ENCODE measurements at regions of chr19 and their contacts with region 1.

Region 1: GRCh38 chr19:46788262-46788967 is at the start of gene SLC1A5:
- DNase-seq: peak; percentile 96
- H3K4me3 ChIP-seq: peak within 1 kb of the TSS; percentile 60 to 99 (median 89)
- H3K27ac ChIP-seq: peak within 1 kb of the TSS; percentile 98
- H3K4me1 ChIP-seq: peaks cover 33% of the 10 kb centered on the region
- H3K27me3 ChIP-seq: no peaks in the 10 kb centered on the region
- CTCF ChIP-seq: no peak
- POLR2A ChIP-seq: peak; percentile 100
- total RNA-seq, gene SLC1A5: 105 and 114 TPM in 2 replicates

Region 2: GRCh38 chr19:46529622-46530462 is 258.6 kb before region 1 on chr19:
- CTCF ChIA-PET with region 1: no interaction called
- POLR2A ChIA-PET with region 1: no interaction called
- dilution Hi-C with region 1: no loop called
- intact Hi-C with region 1: no loop called
- DNase-seq: peak; percentile 55
- H3K4me3 ChIP-seq: no peak overlapping the region
- H3K27ac ChIP-seq: no peak overlapping the region
- H3K4me1 ChIP-seq: no peaks in the 10 kb centered on the region
- H3K27me3 ChIP-seq: peaks cover 0 to 1% of the 10 kb centered on the region in 2 experiments
- CTCF ChIP-seq: peak; percentile 86 to 94
- POLR2A ChIP-seq: no peak

Region 3: GRCh38 chr19:46542428-46543230 is 245.8 kb before region 1 on chr19:
- CTCF ChIA-PET with region 1: no interaction called
- POLR2A ChIA-PET with region 1: no interaction called
- dilution Hi-C with region 1: no loop called
- intact Hi-C with region 1: no loop called
- DNase-seq: peak; percentile 87
- H3K4me3 ChIP-seq: no peak overlapping the region
- H3K27ac ChIP-seq: no peak overlapping the region
- H3K4me1 ChIP-seq: no peaks in the 10 kb centered on the region
- H3K27me3 ChIP-seq: no peaks in the 10 kb centered on the region
- CTCF ChIP-seq: peak; percentile 72 to 74
- POLR2A ChIP-seq: no peak

Region 4: GRCh38 chr19:46753420-46754155 is 34.8 kb before region 1 on chr19:
- CTCF ChIA-PET with region 1: interaction called, 9 read pairs
- POLR2A ChIA-PET with region 1: interaction called, 5 read pairs
- dilution Hi-C with region 1: no loop called
- intact Hi-C with region 1: loop called (anchors 1 kb)
- DNase-seq: peak; percentile 41
- H3K4me3 ChIP-seq: no peak overlapping the region
- H3K27ac ChIP-seq: no peak overlapping the region
- H3K4me1 ChIP-seq: peaks cover 27% of the 10 kb centered on the region
- H3K27me3 ChIP-seq: no peaks in the 10 kb centered on the region
- CTCF ChIP-seq: peak; percentile 47 to 53
- POLR2A ChIP-seq: no peak

Region 5: DNA sequence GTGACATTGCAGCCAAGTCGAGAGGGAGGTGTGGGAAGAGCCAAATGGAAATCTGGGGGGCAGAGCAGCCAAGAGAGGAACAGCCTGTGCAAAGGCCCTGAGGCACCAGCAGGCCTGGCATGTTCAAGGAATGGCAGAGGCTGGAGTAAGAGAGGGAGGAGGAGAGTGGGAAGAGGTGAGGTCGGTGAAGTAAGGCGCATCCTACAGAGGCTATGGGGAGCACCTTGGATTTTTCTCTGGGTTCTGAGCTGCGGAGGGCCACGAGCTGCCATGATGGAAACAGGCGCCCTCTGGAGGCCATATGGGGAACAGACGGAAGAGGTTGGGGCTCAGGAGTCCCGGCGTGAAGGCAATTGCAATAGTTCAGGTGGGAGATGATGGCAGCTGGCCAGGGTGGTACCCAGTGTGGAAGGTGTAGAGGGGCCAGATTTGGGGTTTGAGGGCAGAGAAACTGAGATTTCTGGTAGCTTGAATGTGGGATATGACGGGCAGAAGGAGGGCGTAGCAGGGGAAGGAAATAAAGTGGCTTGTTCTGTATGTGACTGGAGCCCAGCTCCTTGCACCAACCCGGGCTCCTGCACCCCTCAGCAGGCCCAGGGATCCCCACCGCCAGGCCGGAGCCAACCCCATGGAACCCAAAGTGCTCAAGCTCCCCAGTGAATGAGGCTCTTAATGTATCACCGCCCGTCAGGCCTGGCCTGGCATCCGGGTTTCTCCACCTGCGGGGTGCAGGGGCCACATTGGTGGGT is 21.7 kb before region 1 on chr19:
- CTCF ChIA-PET with region 1: interaction called, 21 read pairs
- POLR2A ChIA-PET with region 1: interaction called, 6 read pairs
- dilution Hi-C with region 1: no loop called
- intact Hi-C with region 1: no loop called
- DNase-seq: peak; percentile 27
- H3K4me3 ChIP-seq: no peak overlapping the region
- H3K27ac ChIP-seq: no peak overlapping the region
- H3K4me1 ChIP-seq: no peaks in the 10 kb centered on the region
- H3K27me3 ChIP-seq: no peaks in the 10 kb centered on the region
- CTCF ChIP-seq: peak; percentile 85
- POLR2A ChIP-seq: no peak

Region 6: GRCh38 chr19:46828484-46828883 is 40.1 kb after region 1 on chr19:
- CTCF ChIA-PET with region 1: interaction called, 21 read pairs
- POLR2A ChIA-PET with region 1: interaction called, 24 read pairs
- dilution Hi-C with region 1: no loop called
- intact Hi-C with region 1: loop called (anchors 1 kb)
- DNase-seq: peak; percentile 30
- H3K4me3 ChIP-seq: no peak overlapping the region
- H3K27ac ChIP-seq: no peak overlapping the region
- H3K4me1 ChIP-seq: peaks cover 3% of the 10 kb centered on the region
- H3K27me3 ChIP-seq: no peaks in the 10 kb centered on the region
- CTCF ChIP-seq: no peak
- POLR2A ChIP-seq: no peak

Region 7: DNA sequence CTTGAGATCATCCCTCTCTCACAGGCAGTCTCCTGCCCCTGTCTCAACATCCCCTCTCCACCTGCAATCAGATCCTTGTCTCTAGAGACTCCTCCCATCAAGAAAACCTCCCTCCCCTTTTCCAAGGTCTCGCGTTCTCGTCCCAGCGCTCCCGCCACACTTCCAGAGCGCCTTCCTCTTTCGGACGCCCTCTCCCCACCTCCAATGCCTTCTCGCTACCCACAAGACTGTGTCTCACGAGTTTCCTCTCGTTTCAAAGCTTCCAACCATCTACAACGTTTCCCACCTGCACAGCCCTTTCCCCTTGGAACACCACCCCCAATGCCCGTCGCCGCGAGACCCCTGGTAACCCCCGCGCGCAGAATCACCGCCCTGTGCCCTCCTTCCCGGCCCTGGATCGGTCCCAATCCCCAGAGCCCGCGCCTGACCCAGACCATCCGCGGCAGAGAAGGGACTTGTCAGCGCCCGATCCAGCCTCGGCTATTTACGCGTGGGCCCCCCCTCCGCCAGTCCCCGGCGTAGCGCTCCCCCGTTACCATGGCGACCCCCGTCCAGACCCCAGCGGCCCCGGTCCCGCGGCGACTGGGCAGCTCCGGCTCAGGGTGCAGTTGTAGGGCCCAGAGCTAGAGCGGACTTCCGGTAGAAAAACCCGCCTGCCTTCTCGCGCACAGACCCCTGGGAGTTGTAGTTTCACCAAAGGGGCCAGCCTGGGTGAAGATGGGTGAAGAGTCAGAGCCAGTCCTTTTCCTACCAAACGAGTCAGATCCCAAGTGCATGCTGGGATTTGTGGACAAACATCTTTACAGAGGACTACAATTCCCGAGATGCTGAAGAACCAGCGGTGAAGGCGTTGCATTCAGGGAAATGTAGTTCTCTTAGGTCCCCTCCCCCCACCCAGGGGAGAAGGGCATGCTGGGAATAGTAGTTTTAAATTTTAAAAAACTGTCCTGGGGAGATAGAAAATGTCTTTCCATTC is 62.1 kb after region 1 on chr19 and contains the start of gene AP2S1:
- CTCF ChIA-PET with region 1: interaction called, 3 read pairs
- POLR2A ChIA-PET with region 1: interaction called, 3 read pairs
- dilution Hi-C with region 1: no loop called
- intact Hi-C with region 1: loop called (anchors 1 kb)
- DNase-seq: peak; percentile 99
- H3K4me3 ChIP-seq: peak within 1 kb of the TSS; percentile 71 to 97 (median 89)
- H3K27ac ChIP-seq: peak within 1 kb of the TSS; percentile 73
- H3K4me1 ChIP-seq: peaks cover 10% of the 10 kb centered on the region
- H3K27me3 ChIP-seq: no peaks in the 10 kb centered on the region
- CTCF ChIP-seq: no peak
- POLR2A ChIP-seq: peak; percentile 70
- total RNA-seq, gene AP2S1: 279 and 313 TPM in 2 replicates

Region 8: GRCh38 chr19:47035127-47036096 is 247.0 kb after region 1 on chr19:
- CTCF ChIA-PET with region 1: no interaction called
- POLR2A ChIA-PET with region 1: no interaction called
- dilution Hi-C with region 1: no loop called
- intact Hi-C with region 1: no loop called
- DNase-seq: peak; percentile 92
- H3K4me3 ChIP-seq: peak overlapping the region; percentile 32 to 75 (median 73)
- H3K27ac ChIP-seq: no peak overlapping the region
- H3K4me1 ChIP-seq: peaks cover 8% of the 10 kb centered on the region
- H3K27me3 ChIP-seq: peaks cover 0 to 2% of the 10 kb centered on the region in 2 experiments
- CTCF ChIP-seq: peak; percentile 84 to 94
- POLR2A ChIP-seq: no peak

Region 9: DNA sequence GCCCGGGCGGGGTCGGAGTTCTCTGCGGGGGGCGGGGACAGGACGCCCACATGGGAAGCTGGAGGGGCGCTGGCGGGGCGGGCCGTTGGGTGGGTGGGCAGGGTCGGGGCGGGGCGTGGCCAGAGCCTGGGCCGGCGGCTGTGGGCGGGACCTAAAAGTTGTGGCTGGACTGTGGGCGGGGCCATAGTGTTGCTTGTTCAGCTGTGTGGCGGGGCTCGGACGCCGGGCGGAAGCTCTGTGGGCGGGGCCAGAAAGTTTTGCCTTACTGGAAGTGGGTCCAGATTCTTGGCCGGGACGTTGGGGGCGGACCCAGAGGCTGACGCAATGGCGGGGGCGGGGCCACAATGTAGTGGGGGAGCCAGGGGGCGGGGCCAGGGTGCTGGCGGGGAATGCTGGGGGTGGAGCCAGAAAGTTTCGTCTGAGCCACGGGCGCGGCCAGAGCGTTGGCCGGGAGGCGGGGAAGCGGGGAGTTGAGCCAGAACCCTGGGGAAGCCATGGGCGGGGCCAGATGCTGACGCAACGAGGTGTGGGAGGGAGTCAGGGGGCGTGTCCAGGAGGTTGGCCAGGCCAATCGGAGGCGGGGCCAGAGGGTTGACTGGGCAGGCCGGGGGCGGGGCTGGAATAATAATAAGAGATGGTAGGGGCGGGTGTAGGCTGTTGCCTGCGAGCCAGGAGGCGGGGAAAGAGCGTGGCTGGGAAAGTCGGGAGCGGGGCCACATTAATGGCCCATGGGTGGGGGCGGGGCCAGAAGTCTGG is 468.5 kb after region 1 on chr19:
- CTCF ChIA-PET with region 1: no interaction called
- POLR2A ChIA-PET with region 1: no interaction called
- dilution Hi-C with region 1: no loop called
- intact Hi-C with region 1: loop called (anchors 5 kb)
- DNase-seq: peak; percentile 99
- H3K4me3 ChIP-seq: peak overlapping the region in 2 of 3 experiments; percentile 34 to 73
- H3K27ac ChIP-seq: peak overlapping the region; percentile 96
- H3K4me1 ChIP-seq: peaks cover 11% of the 10 kb centered on the region
- H3K27me3 ChIP-seq: no peaks in the 10 kb centered on the region
- CTCF ChIP-seq: no peak
- POLR2A ChIP-seq: no peak

Measured in endothelial cell of umbilical vein (primary cell).